B cell (primary cell): ENCODE measurements at regions of chr17 and their contacts with region 1.

Region 1: DNA sequence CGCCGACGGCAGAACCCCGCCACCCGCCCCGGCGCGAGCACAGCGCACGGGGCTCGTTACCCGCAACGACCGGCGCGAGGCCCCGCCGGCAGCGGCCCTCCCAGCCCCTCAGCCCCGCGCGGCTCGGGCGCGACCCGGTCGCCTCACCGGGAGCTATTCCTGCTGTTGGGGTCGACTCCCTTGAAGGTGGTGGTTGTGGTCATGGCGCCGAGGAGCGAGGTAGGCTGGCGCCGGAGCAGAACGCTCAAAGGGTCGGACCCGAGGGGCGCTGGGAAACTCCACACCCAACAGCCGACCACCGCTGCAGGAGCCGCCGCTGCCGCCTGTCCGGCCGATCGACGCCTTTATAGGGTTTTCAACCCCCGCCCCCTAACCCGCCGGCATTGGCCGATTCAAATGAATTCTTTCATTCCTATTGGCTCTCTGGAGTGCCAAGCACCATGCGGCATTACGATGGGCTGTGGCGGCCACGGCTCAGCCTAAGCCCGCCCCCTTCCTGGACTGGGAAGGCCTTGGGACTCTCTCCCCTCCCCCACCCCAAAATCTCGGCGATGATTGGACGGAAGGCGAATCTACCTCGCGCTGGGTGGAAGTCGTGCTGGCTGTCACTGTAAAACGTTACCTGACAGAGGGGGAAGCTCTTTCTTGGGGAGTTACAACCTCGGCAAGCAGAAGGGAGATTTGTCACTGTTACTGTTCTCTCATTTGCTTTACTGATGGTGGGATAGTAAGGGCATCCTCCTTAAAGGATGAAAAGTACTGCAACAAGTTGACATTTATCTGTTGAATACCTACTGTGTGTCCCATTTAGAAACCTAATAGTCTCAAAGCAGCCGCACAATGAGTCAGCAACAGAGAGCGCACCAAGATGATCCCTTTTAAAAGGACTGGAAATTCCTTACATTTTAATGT is at the start of gene JPT1:
- DNase-seq: peak; percentile 98
- ATAC-seq: peak; percentile 97
- H3K4me3 ChIP-seq: peak within 1 kb of the TSS; percentile 69 to 83 (median 74)
- H3K4me3 Mint-ChIP-seq: peak within 1 kb of the TSS; percentile 95
- H3K27ac ChIP-seq: peak within 1 kb of the TSS; percentile 2 to 65
- H3K27ac Mint-ChIP-seq: peak within 1 kb of the TSS; percentile 89
- H3K4me1 ChIP-seq: peaks cover 15 to 27% of the 10 kb centered on the region in 2 donors
- H3K4me1 Mint-ChIP-seq: peaks cover 30% of the 10 kb centered on the region
- H3K27me3 ChIP-seq: no peaks in the 10 kb centered on the region
- H3K27me3 Mint-ChIP-seq: no peaks in the 10 kb centered on the region
- CTCF ChIP-seq: no peak
- total RNA-seq, gene JPT1: 37.6 and 37.8 TPM in 2 replicates

Region 2: DNA sequence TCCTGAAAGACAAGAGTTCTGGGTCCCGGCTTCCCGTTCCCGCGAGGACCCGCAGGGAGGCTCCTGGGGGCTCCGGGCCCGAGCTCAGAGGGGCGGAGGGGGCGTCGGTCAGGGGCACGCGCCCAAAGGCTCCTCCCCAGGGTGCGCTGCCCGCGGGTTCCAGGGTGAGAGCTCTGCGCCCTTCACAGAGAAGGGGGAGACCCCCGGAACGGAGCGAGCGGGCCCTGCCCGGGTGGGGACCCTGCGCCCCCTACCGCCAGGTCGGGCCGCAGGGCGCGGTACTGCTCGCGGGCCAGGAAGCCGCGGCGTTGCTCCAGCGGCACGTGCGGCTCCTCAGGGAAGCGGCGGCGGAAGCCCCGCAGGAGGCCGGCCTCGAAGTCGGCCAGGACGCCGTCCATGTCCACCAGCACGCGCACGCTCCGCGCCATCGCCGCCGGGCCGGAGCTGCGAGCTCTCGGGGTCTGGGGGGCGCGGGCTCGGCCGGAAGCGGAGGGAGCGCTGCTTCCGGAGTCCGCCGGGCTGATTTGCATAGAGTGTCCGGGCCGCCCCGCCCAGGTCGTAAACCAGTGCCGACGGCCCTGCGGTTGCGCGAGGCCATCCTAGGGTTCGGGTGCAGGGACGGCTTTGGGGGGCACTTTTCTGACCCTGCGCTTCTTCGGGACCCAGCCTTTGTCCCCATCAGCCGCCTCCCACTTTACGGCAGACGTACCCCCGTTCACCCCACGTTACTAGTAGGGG is 23.0 kb before region 1 on chr17 and contains the start of gene NT5C:
- CTCF ChIA-PET with region 1: interaction called, 9 read pairs
- POLR2A ChIA-PET with region 1: interaction called, 3 read pairs
- intact Hi-C with region 1: loop called (anchors 1 kb)
- DNase-seq: peak; percentile 88
- ATAC-seq: peak; percentile 83
- H3K4me3 ChIP-seq: peak within 1 kb of the TSS; percentile 40 to 95 (median 87)
- H3K4me3 Mint-ChIP-seq: peak within 1 kb of the TSS; percentile 90
- H3K27ac ChIP-seq: peak within 1 kb of the TSS; percentile 64 to 85
- H3K27ac Mint-ChIP-seq: peak within 1 kb of the TSS; percentile 96
- H3K4me1 ChIP-seq: peaks cover 11 to 25% of the 10 kb centered on the region in 2 donors
- H3K4me1 Mint-ChIP-seq: peaks cover 35% of the 10 kb centered on the region
- H3K27me3 ChIP-seq: no peaks in the 10 kb centered on the region
- H3K27me3 Mint-ChIP-seq: no peaks in the 10 kb centered on the region
- CTCF ChIP-seq: peak; percentile 73
- total RNA-seq, gene NT5C: 98.9 and 103 TPM in 2 replicates